Heart left ventricle (tissue), 16 donors: ENCODE measurements at regions of chrX and their contacts with region 1.

Region 1: DNA sequence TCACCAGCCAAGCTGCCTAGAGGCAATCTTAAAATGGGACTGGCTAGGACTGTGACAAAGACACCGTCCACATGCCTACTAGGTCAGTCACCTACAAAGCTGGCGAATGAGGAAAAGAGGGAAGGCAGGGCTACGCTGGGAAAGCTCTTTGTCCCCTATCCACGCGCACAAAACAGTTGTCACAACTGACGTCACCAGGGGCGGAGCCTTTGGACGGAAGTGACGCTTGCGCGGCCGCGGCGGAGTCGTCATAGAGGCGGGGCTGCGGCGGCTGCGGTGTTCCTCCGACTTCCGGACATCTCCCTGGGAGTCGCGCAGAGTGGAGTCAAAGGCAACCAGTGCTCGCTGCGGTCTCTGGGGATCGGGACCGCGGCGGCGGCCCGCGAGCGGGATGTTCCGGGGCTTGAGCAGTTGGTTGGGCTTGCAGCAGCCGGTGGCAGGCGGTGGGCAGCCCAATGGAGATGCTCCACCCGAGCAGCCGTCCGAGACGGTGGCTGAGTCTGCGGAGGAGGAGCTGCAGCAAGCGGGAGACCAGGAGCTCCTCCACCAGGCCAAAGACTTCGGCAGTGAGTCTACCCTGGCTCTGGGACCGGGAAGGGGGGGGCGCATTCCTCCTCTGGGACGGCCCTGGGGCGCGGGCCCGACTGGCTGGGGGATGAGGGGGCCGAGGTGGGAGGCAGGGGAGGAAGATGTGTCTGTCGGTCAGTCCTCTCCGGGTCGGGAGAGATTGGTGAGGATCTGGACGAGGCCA is at the start of gene SYAP1:
- DNase-seq: peak; percentile 92 to 97 (median 96)
- ATAC-seq: peak; percentile 96 to 99 (median 98)
- H3K4me3 ChIP-seq: peak within 1 kb of the TSS; percentile 57 to 94 (median 78)
- H3K27ac ChIP-seq: peak within 1 kb of the TSS; percentile 83 to 97 (median 94)
- H3K4me1 ChIP-seq: peaks cover 0 to 28% (median 9%) of the 10 kb centered on the region in 12 donors
- H3K27me3 ChIP-seq: peaks cover 0 to 4% (median 0%) of the 10 kb centered on the region in 9 donors
- CTCF ChIP-seq: peak in 1 of 12 donors; percentile 6
- POLR2A ChIP-seq: peak in 1 of 2 donors; percentile 95
- total RNA-seq, gene SYAP1: 15.0 to 23.4 (median 17.3) TPM

Region 2: GRCh38 chrX:16496175-16496574 is 223.3 kb before region 1 on chrX:
- intact Hi-C with region 1: no loop called
- DNase-seq: no peak
- ATAC-seq: no peak
- H3K4me3 ChIP-seq: no peak overlapping the region
- H3K27ac ChIP-seq: no peak overlapping the region
- H3K4me1 ChIP-seq: no peaks in the 10 kb centered on the region
- H3K27me3 ChIP-seq: no peaks in the 10 kb centered on the region
- CTCF ChIP-seq: no peak
- POLR2A ChIP-seq: no peak

Region 3: DNA sequence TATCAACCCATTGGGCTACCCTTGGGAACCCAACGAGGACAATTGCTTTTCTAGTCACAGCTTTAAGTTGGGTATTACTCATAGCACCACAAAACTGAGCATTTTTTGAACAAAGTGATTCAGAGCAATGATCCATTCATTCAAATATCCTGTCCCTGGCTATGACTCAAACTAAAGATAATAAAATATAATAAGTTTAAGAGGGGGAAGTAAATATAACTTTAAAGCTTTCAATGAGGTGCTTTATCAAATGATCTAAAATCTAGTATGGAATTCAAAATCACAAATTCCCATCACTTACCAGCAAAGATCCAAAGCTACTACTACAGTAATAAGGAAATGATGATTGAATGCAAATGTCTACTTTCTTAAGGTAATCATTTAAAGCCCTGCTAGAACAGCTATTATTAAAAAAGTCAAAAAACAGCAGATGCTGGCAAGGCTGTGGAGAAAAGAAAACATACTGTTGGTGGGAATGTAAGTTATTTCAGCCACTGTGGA is 109.3 kb before region 1 on chrX:
- intact Hi-C with region 1: no loop called
- DNase-seq: no peak
- ATAC-seq: no peak
- H3K4me3 ChIP-seq: no peak overlapping the region
- H3K27ac ChIP-seq: no peak overlapping the region
- H3K4me1 ChIP-seq: peaks cover 0 to 7% (median 0%) of the 10 kb centered on the region in 12 donors
- H3K27me3 ChIP-seq: peaks cover 0 to 13% (median 0%) of the 10 kb centered on the region in 9 donors
- CTCF ChIP-seq: no peak
- POLR2A ChIP-seq: no peak

Region 4: GRCh38 chrX:16786139-16786790 is 66.8 kb after region 1 on chrX and contains the start of gene TXLNG:
- intact Hi-C with region 1: loop called in 3 of 10 experiments (anchors 2 to 10 kb)
- DNase-seq: peak; percentile 95 to 100 (median 96)
- ATAC-seq: peak; percentile 99 to 100 (median 100)
- H3K4me3 ChIP-seq: peak within 1 kb of the TSS; percentile 63 to 93 (median 78)
- H3K27ac ChIP-seq: peak within 1 kb of the TSS; percentile 47 to 93 (median 84)
- H3K4me1 ChIP-seq: peaks cover 0 to 16% (median 6%) of the 10 kb centered on the region in 12 donors
- H3K27me3 ChIP-seq: no peaks in the 10 kb centered on the region
- CTCF ChIP-seq: no peak
- POLR2A ChIP-seq: peak in 1 of 2 donors; percentile 85
- total RNA-seq, gene TXLNG: 4.3 to 8.1 (median 6.3) TPM

Region 5: DNA sequence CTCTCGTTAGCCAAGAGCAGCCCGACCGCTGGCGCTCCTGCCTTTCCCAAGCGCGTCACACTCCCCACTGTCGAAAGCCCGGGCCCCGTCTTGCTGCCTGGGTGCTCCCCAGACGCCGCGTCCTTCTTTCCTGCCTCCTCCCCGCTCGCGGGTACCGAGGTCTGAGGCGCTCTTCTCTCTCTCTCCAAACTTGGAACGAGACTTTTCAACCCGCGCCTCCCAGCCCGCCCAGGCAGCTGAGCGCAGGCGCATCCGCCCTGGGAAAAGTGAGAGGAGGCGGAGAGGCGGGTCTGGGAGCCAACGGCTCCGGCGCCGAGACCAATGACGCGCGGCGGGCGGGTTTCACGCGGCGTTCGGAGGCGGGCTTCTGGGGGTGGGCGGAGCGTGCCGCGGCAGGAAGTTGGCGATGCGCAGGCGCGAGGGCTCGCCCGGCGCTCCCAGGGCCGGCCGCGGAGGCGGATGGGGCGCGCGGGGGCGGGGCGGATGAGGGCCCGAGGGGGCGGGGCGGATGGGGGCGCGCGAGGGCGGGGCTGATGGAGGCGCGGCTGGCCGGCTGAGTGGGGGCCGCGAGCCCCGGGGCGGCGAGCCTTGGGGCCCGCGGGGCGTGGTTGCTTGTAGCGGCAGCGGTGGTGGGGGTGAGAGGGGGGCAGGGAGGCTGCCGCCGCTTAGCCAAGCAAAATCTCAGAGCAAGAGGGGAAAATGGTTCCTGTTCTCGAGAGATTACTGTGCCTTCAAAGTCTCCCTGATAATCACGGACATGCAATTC is 150.8 kb after region 1 on chrX and contains the start of gene RBBP7:
- intact Hi-C with region 1: loop called in 1 of 10 experiments (anchors 2 kb)
- DNase-seq: peak; percentile 91 to 96 (median 95)
- ATAC-seq: peak; percentile 96 to 98 (median 98)
- H3K4me3 ChIP-seq: peak within 1 kb of the TSS; percentile 46 to 86 (median 66)
- H3K27ac ChIP-seq: peak within 1 kb of the TSS; percentile 87 to 97 (median 92)
- H3K4me1 ChIP-seq: peaks cover 0 to 29% (median 12%) of the 10 kb centered on the region in 12 donors
- H3K27me3 ChIP-seq: peaks cover 0 to 64% (median 0%) of the 10 kb centered on the region in 9 donors
- CTCF ChIP-seq: no peak
- POLR2A ChIP-seq: peak in 1 of 2 donors; percentile 88
- total RNA-seq, gene RBBP7: 88.7 to 124 (median 107) TPM